Activated CD8-positive, alpha-beta T cell treated with anti-CD3 and anti-CD28 coated beads, Interleukin-2, amount 10 ng/mL, durations not matched to agents 7 days and 5 days (primary cell): ENCODE measurements at regions of chr19 and their contacts with region 1.

Region 1: GRCh38 chr19:17522988-17523872 is 11.8 kb downstream of the PGLS start:
- DNase-seq: peak; percentile 89
- ATAC-seq: peak; percentile 89
- H3K4me3 Mint-ChIP-seq: peak overlapping the region; percentile 63
- H3K27ac Mint-ChIP-seq: peak overlapping the region; percentile 92
- H3K4me1 Mint-ChIP-seq: peaks cover 49% of the 10 kb centered on the region
- H3K27me3 Mint-ChIP-seq: no peaks in the 10 kb centered on the region

Region 2: DNA sequence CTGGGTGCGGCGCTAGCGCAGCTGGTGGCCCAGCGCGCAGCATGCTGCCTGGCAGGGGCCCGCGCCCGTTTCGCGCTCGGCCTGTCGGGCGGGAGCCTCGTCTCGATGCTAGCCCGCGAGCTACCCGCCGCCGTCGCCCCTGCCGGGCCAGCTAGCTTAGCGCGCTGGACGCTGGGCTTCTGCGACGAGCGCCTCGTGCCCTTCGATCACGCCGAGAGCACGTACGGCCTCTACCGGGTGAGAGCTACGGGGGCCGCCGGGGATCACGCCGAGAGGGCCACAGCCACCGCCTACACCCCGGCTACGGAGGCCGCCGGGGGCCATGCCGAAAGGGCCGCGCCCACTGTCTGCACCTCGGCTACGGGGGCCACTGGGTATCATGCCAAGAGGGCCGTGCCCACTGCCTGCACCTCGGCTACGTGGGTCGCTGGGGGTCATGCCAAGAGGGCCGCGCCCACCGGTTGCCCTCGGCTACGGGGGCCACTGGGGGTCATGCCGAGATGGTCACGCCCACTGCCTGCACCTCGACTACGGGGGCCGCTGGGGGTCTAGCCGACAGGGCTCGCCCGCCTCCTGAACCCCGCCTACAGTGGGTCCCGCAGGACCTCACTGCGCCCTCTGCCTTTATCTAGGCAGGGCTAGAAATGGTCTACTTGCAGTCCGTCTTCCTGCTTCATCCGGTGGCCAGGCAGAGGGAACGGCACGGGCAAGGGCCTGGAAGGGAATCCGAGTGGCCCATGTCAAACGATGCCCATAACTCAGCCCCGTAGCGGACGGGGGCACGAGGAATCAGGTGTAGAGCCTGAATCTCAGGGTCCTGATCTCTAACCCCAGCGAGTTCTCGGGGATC is 11.3 kb before region 1 on chr19:
- CTCF ChIA-PET with region 1: interaction called, 13 read pairs
- POLR2A ChIA-PET with region 1: interaction called, 36 read pairs
- DNase-seq: peak; percentile 94
- ATAC-seq: peak; percentile 74
- H3K4me3 Mint-ChIP-seq: peak overlapping the region; percentile 94
- H3K27ac Mint-ChIP-seq: peak overlapping the region; percentile 97
- H3K4me1 Mint-ChIP-seq: peaks cover 44% of the 10 kb centered on the region
- H3K27me3 Mint-ChIP-seq: no peaks in the 10 kb centered on the region